Heart left ventricle (tissue), 16 donors: ENCODE measurements at regions of chrX and their contacts with region 1.

Region 1: DNA sequence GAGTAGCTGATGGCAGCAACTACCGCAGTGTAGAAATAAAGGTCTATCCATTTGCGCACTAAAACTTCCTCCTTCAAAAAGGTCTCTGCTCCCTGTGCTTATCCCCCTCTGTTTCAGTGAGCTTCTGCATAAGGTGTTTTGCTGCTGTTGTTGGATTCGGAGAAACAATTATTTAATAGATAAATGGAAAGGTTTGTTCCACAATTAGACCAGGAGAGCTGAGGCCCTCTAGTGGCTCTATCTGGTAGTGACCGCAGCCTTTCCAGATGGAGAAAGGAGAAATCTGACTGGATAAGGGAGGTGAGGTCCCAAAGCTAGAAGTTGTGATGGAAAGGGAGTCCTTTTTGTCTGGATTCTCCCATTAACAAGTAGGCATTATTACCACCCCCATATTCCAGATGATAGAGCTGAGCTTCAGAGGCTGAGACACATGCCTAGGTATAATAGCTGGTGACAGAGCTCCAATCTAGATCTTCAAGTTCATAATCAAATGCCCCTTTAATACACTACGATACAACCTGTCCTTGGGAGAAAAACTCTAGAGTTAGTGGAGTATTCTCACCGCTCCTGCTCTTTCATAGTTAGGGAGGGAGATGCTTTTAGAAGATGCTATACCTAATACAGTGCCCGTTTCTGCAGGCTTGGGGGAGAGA is 5.1 kb upstream of the GABRQ start:
- DNase-seq: peak in 2 of 5 donors; percentile 20 to 43
- ATAC-seq: no peak
- H3K4me3 ChIP-seq: no peak overlapping the region
- H3K27ac ChIP-seq: no peak overlapping the region
- H3K4me1 ChIP-seq: peaks cover 0 to 3% (median 0%) of the 10 kb centered on the region in 12 donors
- H3K27me3 ChIP-seq: peaks cover 0 to 34% (median 3%) of the 10 kb centered on the region in 9 donors
- CTCF ChIP-seq: peak; percentile 57 to 85 (median 69)
- POLR2A ChIP-seq: no peak

Region 2: GRCh38 chrX:151151665-151152267 is 1480.8 kb before region 1 on chrX:
- intact Hi-C with region 1: loop called in 4 of 10 experiments (anchors 5 to 10 kb)
- DNase-seq: peak in 1 of 5 donors; percentile 16
- ATAC-seq: peak in 3 of 4 donors; percentile 50 to 57 (median 56)
- H3K4me3 ChIP-seq: no peak overlapping the region
- H3K27ac ChIP-seq: no peak overlapping the region
- H3K4me1 ChIP-seq: no peaks in the 10 kb centered on the region
- H3K27me3 ChIP-seq: peaks cover 0 to 54% (median 0%) of the 10 kb centered on the region in 9 donors
- CTCF ChIP-seq: peak; percentile 55 to 82 (median 70)
- POLR2A ChIP-seq: no peak

Region 3: GRCh38 chrX:151745651-151746050 is 886.9 kb before region 1 on chrX:
- intact Hi-C with region 1: loop called in 7 of 10 experiments (anchors 2 to 5 kb)
- DNase-seq: no peak
- ATAC-seq: no peak
- H3K4me3 ChIP-seq: no peak overlapping the region
- H3K27ac ChIP-seq: no peak overlapping the region
- H3K4me1 ChIP-seq: no peaks in the 10 kb centered on the region
- H3K27me3 ChIP-seq: peaks cover 0 to 10% (median 0%) of the 10 kb centered on the region in 9 donors
- CTCF ChIP-seq: no peak
- POLR2A ChIP-seq: no peak

Region 4: DNA sequence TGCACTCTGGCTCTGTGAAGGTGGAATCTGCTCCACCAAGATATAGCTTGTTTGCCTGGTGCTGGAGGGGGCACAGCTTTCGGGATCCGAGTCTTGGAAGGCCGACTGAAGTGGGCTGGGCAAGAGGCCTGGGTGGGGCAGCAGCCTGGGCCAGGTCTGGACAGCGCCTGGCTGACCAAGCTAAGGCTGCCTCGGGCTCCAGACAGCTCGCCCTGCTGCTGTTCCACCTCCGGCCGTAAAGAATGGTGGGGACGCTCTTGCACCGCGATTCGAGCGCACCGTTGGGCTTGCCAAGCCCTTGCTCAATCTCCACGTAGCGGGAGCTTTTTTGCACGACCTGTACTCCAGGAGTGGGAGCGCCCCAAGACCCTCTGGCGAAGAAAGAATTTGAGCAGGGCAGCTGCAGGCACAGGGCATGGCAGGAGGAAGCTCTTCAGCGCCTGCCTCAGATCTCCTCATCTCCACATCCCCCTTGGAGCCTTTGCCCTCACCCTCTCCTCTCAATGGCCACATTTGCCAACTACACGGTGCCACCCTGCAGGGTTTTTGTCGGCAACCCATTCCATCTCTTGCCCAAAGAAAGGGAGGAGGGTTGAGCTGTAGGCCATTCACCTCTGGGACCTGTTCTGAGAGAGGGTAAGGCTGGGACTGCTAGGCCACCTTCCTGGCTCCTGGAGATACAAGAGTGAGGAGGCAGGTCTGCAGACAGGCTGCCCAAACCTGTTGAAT is 879.1 kb before region 1 on chrX:
- intact Hi-C with region 1: loop called (anchors 2 to 5 kb)
- DNase-seq: peak; percentile 25 to 82 (median 48)
- ATAC-seq: peak; percentile 37 to 95 (median 90)
- H3K4me3 ChIP-seq: no peak overlapping the region
- H3K27ac ChIP-seq: no peak overlapping the region
- H3K4me1 ChIP-seq: peaks cover 0 to 3% (median 0%) of the 10 kb centered on the region in 12 donors
- H3K27me3 ChIP-seq: peaks cover 0 to 18% (median 0%) of the 10 kb centered on the region in 9 donors
- CTCF ChIP-seq: peak; percentile 63 to 85 (median 78)
- POLR2A ChIP-seq: no peak

Region 5: GRCh38 chrX:151825927-151826481 is 806.6 kb before region 1 on chrX:
- intact Hi-C with region 1: loop called in 1 of 10 experiments (anchors 10 kb)
- DNase-seq: no peak
- ATAC-seq: peak in 3 of 4 donors; percentile 53 to 75 (median 55)
- H3K4me3 ChIP-seq: no peak overlapping the region
- H3K27ac ChIP-seq: no peak overlapping the region
- H3K4me1 ChIP-seq: peaks cover 0 to 4% (median 0%) of the 10 kb centered on the region in 12 donors
- H3K27me3 ChIP-seq: no peaks in the 10 kb centered on the region
- CTCF ChIP-seq: peak in 5 of 12 donors; percentile 16 to 27 (median 23)
- POLR2A ChIP-seq: no peak

Region 6: DNA sequence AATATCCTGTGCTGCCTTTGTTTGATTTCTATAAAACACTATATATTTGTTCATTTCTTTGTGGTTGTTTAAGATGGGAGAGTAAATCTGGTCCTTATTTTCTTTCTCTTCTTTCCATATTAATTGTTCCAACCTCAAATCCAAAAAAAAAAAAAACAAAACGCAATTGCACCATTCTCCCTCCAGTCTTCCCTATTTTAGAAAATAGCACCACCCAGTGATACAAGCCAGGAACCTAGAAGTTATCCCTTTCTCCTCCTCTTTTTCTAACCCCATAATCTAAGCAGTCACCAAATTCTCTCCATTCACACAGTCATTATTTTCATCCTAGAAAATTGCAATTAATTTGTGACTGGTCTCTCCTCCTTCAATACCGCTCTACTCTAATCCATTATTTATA is 289.3 kb before region 1 on chrX:
- intact Hi-C with region 1: loop called in 1 of 10 experiments (anchors 10 kb)
- DNase-seq: no peak
- ATAC-seq: no peak
- H3K4me3 ChIP-seq: no peak overlapping the region
- H3K27ac ChIP-seq: no peak overlapping the region
- H3K4me1 ChIP-seq: no peaks in the 10 kb centered on the region
- H3K27me3 ChIP-seq: peaks cover 0 to 4% (median 0%) of the 10 kb centered on the region in 9 donors
- CTCF ChIP-seq: peak in 3 of 12 donors; percentile 12 to 27 (median 20)
- POLR2A ChIP-seq: no peak